Dorsolateral prefrontal cortex (tissue), 120 donors: ENCODE measurements at regions of chr22 and their contacts with region 1.

Region 1: GRCh38 chr22:35299673-35300497 is at the start of gene TOM1:
- DNase-seq: peak; percentile 95 to 98 (median 96)
- H3K4me3 ChIP-seq: peak within 1 kb of the TSS; percentile 65 to 100 (median 93)
- H3K27ac ChIP-seq: peak within 1 kb of the TSS; percentile 69 to 99 (median 97)
- H3K27me3 ChIP-seq: no peaks in the 10 kb centered on the region
- CTCF ChIP-seq: peak in 9 of 56 donors; percentile 4 to 45 (median 22)
- total RNA-seq, gene TOM1: 51.2 to 90.3 (median 65.3) TPM

Region 2: DNA sequence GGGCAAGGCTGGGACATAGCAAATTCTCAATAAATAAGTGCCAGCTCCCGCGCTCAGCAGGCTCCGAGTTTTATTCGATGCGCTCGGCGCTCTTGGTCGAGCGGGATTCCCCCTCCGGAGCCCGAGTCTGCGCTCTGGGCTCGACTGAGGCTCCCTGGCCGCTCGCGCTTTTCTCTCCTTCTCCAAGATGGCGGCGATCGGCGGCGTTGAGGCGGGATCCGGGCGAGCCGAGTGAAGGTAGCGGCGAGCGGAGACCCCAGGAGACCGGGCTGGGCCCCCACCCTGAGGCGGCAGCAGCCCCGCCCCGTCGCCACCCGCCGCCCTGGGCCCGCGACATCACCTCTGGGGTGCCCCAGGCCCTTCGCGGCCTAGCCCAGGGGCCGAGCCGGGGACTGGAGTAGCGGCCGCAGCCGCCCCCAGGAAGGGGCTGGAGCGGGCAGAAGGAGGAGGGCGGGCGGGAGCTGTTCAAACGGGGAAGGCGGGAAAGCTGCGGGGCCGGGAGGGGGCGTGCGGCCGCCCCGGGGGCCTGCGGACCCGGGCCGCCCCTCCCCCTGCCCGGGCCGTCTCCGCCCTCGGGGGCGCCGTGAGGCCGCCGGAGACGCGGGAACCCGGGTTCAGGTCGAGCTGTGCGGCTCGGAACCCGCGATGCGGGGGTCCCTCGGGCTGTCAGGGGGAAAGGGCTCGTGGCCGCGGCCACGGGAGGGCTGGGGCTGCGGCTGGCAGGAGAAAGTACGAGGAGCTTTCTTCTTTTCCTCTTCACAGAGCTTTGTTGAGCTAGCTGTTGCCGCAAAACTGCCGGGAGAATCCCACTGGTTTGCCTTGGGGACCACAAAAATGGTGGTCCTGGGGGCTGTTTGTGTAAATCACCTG is 42.3 kb before region 1 on chr22 and contains the start of gene HMGXB4:
- intact Hi-C with region 1: loop called in 1 of 2 experiments (anchors 2 kb)
- DNase-seq: peak; percentile 68 to 93 (median 86)
- H3K4me3 ChIP-seq: peak within 1 kb of the TSS; percentile 54 to 97 (median 86)
- H3K27ac ChIP-seq: peak within 1 kb of the TSS; percentile 71 to 98 (median 93)
- H3K27me3 ChIP-seq: no peaks in the 10 kb centered on the region
- CTCF ChIP-seq: peak in 32 of 56 donors; percentile 1 to 58 (median 28)
- total RNA-seq, gene HMGXB4: 12.7 to 29.9 (median 20.4) TPM

Region 3: DNA sequence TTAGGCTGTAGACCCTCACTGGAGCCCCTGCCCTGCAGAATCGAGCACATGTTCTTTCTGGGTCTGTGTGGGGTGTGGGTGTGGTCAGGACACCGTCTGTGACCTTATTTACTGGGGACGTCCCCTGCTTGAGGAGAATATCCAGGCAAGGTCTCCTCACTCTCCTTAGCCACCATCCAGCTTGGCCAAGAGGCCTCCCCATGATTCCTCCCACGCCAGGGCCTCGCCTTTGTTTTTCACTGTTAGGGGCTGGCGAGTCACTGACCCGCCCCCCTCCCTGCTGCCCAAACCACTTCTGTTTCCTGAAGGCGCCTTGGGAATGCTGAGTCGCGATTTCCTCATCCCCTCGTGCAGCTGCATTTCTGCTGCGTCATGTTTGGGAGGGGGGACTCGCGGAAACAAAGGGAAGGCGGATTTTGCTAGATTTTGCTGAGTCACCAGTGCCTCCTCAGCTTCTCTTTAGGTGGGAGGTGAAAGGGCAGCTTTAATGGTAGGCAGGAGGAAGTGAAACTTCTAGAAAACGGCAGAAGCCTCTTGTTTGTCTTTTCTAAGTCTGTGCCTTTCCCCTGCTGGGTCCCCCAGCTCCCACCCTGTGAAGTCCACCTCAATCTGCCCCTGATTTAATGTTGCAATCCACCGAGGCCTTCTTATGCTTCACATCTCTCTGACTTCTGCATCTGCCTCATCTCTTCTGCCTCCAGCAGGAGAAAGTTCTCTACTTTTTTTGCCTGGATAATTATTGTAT is 77.0 kb after region 1 on chr22:
- intact Hi-C with region 1: no loop called
- DNase-seq: peak in 9 of 10 donors; percentile 60 to 85 (median 77)
- H3K4me3 ChIP-seq: peak overlapping the region in 10 of 59 donors; percentile 3 to 26 (median 12)
- H3K27ac ChIP-seq: peak overlapping the region in 57 of 59 donors; percentile 17 to 87 (median 77)
- H3K27me3 ChIP-seq: no peaks in the 10 kb centered on the region
- CTCF ChIP-seq: peak in 11 of 56 donors; percentile 8 to 29 (median 15)